Panc1 (cell line): ENCODE measurements at regions of chr17 and their contacts with region 1.

Region 1: DNA sequence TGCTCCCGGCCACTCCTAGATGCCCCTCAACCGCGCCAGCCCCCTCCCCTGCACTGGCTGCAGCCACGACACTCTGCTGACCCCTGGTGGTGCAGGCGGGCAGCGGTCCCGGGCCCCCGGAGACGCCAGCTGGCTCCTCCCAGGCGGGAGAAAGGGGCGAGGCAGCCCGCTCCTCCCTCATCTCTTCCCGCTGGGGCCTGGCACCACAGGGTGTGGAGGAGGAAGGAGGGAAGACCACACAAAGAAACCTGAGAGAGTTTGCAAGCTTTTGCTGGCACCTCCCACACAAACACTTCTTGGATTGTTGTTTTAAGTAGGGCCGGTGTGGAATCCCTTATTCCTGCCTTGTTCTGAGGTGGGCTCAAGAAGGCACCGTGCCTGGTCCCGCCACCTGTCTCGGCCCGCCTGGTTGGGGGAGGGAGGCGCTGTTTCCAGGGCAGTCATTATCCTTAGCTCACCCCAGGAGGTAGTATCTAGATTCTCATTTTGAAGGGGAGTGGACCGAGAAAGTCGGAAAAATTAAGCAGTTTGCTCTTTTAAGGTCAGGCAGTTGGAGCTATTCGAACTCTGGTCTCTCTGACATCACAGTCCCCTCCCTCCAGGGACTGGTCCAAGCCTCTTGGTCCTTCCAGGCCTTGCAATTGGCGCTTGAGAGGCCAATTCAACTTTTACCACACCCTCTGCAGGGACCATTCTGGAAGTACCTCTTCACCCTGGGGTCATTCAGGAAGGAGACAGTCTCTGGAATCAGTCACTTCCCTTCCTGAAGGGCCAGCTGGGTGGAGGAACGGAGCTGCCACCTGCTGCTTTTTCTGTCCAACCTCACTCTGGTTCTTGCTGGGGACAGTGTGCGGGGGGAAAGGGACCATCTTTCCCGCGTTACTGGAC is 951 bp upstream of the ANKRD13B start:
- DNase-seq: no peak
- ATAC-seq: peak; percentile 75
- H3K4me3 ChIP-seq: peak overlapping the region; percentile 43 to 58
- H3K27ac ChIP-seq: peak overlapping the region; percentile 96
- H3K4me1 ChIP-seq: peaks cover 72% of the 10 kb centered on the region
- H3K27me3 ChIP-seq: no peaks in the 10 kb centered on the region
- CTCF ChIP-seq: peak; percentile 99

Region 2: GRCh38 chr17:29369831-29370735 is 221.9 kb before region 1 on chr17:
- CTCF ChIA-PET with region 1: interaction called, 17 read pairs
- POLR2A ChIA-PET with region 1: no interaction called
- in situ Hi-C with region 1: no loop called
- intact Hi-C with region 1: no loop called
- DNase-seq: peak; percentile 83
- ATAC-seq: peak; percentile 99
- H3K4me3 ChIP-seq: peak overlapping the region; percentile 4 to 42; a peak in 3 of 4 replicates
- H3K27ac ChIP-seq: no peak overlapping the region
- H3K4me1 ChIP-seq: 0 out of 2 replicates have a peak, but pooled peaks cover 5% of the 10 kb centered on the region
- H3K27me3 ChIP-seq: no peaks in the 10 kb centered on the region
- CTCF ChIP-seq: peak; percentile 88

Region 3: GRCh38 chr17:29579866-29580771 is 11.9 kb before region 1 on chr17:
- CTCF ChIA-PET with region 1: interaction called, 13 read pairs
- POLR2A ChIA-PET with region 1: interaction called, 15 read pairs
- in situ Hi-C with region 1: no loop called
- intact Hi-C with region 1: no loop called
- DNase-seq: no peak
- ATAC-seq: peak; percentile 94
- H3K4me3 ChIP-seq: no peak overlapping the region
- H3K27ac ChIP-seq: no peak overlapping the region
- H3K4me1 ChIP-seq: no peaks in the 10 kb centered on the region; the same call in 1 of the 2 replicates
- H3K27me3 ChIP-seq: no peaks in the 10 kb centered on the region
- CTCF ChIP-seq: peak; percentile 93

Region 4: GRCh38 chr17:29617125-29617480 is 25.1 kb after region 1 on chr17:
- CTCF ChIA-PET with region 1: interaction called, 15 read pairs
- POLR2A ChIA-PET with region 1: interaction called, 3 read pairs
- in situ Hi-C with region 1: no loop called
- intact Hi-C with region 1: no loop called
- DNase-seq: no peak
- ATAC-seq: peak; percentile 71
- H3K4me3 ChIP-seq: peak overlapping the region; percentile 28 to 53; a peak in 3 of 4 replicates
- H3K27ac ChIP-seq: peak overlapping the region; percentile 71
- H3K4me1 ChIP-seq: peaks cover 42% of the 10 kb centered on the region
- H3K27me3 ChIP-seq: no peaks in the 10 kb centered on the region
- CTCF ChIP-seq: peak; percentile 85

Region 5: GRCh38 chr17:29645515-29646051 is 53.6 kb after region 1 on chr17:
- CTCF ChIA-PET with region 1: interaction called, 10 read pairs
- POLR2A ChIA-PET with region 1: no interaction called
- in situ Hi-C with region 1: no loop called
- intact Hi-C with region 1: no loop called
- DNase-seq: no peak
- ATAC-seq: no peak
- H3K4me3 ChIP-seq: no peak overlapping the region
- H3K27ac ChIP-seq: no peak overlapping the region
- H3K4me1 ChIP-seq: no peaks in the 10 kb centered on the region
- H3K27me3 ChIP-seq: no peaks in the 10 kb centered on the region
- CTCF ChIP-seq: no peak

Region 6: GRCh38 chr17:29757788-29758187 is 165.8 kb after region 1 on chr17:
- CTCF ChIA-PET with region 1: no interaction called
- POLR2A ChIA-PET with region 1: no interaction called
- in situ Hi-C with region 1: no loop called
- intact Hi-C with region 1: no loop called
- DNase-seq: no peak
- ATAC-seq: no peak
- H3K4me3 ChIP-seq: no peak overlapping the region
- H3K27ac ChIP-seq: no peak overlapping the region
- H3K4me1 ChIP-seq: no peaks in the 10 kb centered on the region
- H3K27me3 ChIP-seq: no peaks in the 10 kb centered on the region
- CTCF ChIP-seq: no peak

Region 7: GRCh38 chr17:30230591-30231125 is 638.7 kb after region 1 on chr17:
- CTCF ChIA-PET with region 1: no interaction called
- POLR2A ChIA-PET with region 1: no interaction called
- in situ Hi-C with region 1: no loop called
- intact Hi-C with region 1: no loop called
- DNase-seq: no peak
- ATAC-seq: no peak
- H3K4me3 ChIP-seq: no peak overlapping the region
- H3K27ac ChIP-seq: no peak overlapping the region
- H3K4me1 ChIP-seq: 0 out of 2 replicates have a peak, but pooled peaks cover 6% of the 10 kb centered on the region
- H3K27me3 ChIP-seq: peaks cover 13% of the 10 kb centered on the region
- CTCF ChIP-seq: no peak